Activated CD8-positive, alpha-beta memory T cell treated with anti-CD3 and anti-CD28 coated beads, Interleukin-2, amount 10 ng/mL, durations not matched to agents 7 days and 5 days (primary cell): ENCODE measurements at regions of chr6 and their contacts with region 1.

Region 1: GRCh38 chr6:127855542-127856159 is 45.2 kb downstream of the THEMIS start:
- DNase-seq: peak; percentile 50
- ATAC-seq: peak; percentile 60
- H3K4me3 Mint-ChIP-seq: no peak overlapping the region
- H3K27ac Mint-ChIP-seq: peak overlapping the region; percentile 75
- H3K4me1 Mint-ChIP-seq: peaks cover 64% of the 10 kb centered on the region
- H3K27me3 Mint-ChIP-seq: no peaks in the 10 kb centered on the region

Region 2: GRCh38 chr6:127845242-127845641 is 10.4 kb before region 1 on chr6:
- CTCF ChIA-PET with region 1: interaction called, 12 read pairs
- DNase-seq: no peak
- ATAC-seq: no peak
- H3K4me3 Mint-ChIP-seq: no peak overlapping the region
- H3K27ac Mint-ChIP-seq: no peak overlapping the region
- H3K4me1 Mint-ChIP-seq: peaks cover 32% of the 10 kb centered on the region
- H3K27me3 Mint-ChIP-seq: no peaks in the 10 kb centered on the region

Region 3: DNA sequence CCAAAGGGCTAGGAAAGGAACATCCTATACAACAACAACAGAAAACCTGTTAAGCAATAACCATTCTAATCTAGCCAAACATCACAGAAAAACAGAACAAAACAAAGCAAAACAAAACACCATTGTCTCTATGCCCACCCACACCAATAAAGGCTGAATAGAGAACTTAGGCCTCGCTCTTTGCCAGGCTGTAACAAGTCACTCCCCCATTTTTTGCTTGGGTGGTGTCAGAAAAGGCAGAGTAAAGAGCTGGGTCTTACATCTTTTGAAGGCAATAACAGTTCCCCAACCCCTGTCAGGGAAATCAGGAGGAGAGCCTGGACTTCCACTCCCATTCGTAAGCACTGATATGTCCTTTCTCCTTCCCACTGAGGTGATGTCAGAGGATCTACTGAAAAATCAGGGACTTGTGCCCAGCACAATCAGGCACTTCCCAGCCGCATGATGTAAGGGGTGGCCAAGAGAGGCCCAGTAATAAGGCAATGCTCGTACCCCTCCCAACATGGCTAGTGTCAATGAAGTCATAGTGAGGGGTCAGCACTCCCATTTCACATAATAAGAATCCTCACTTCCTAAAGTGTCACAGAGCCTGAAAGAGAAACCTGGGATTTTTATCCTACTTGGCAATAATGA is 14.2 kb after region 1 on chr6:
- CTCF ChIA-PET with region 1: interaction called, 11 read pairs
- DNase-seq: no peak
- ATAC-seq: no peak
- H3K4me3 Mint-ChIP-seq: no peak overlapping the region
- H3K27ac Mint-ChIP-seq: no peak overlapping the region
- H3K4me1 Mint-ChIP-seq: peaks cover 55% of the 10 kb centered on the region
- H3K27me3 Mint-ChIP-seq: no peaks in the 10 kb centered on the region

Region 4: GRCh38 chr6:128327890-128328289 is 472.2 kb after region 1 on chr6:
- CTCF ChIA-PET with region 1: interaction called, 17 read pairs
- DNase-seq: peak; percentile 52
- ATAC-seq: peak; percentile 91
- H3K4me3 Mint-ChIP-seq: no peak overlapping the region
- H3K27ac Mint-ChIP-seq: no peak overlapping the region
- H3K4me1 Mint-ChIP-seq: no peaks in the 10 kb centered on the region
- H3K27me3 Mint-ChIP-seq: peaks cover 3% of the 10 kb centered on the region